ENCODE measurements at regions of chr13 and their contacts with region 1.

Region 1: GRCh38 chr13:39616087-39616694 is 13.2 kb upstream of the LHFPL6 start:
- DNase-seq: peak; percentile 72
- ATAC-seq: peak; percentile 59
- H3K4me3 ChIP-seq: no peak overlapping the region
- H3K27ac ChIP-seq: no peak overlapping the region
- H3K4me1 ChIP-seq: no peaks in the 10 kb centered on the region
- H3K27me3 ChIP-seq: no peaks in the 10 kb centered on the region
- CTCF ChIP-seq: peak; percentile 77

Region 2: GRCh38 chr13:39051157-39051556 is 565.0 kb before region 1 on chr13:
- CTCF ChIA-PET with region 1: interaction called, 5 read pairs
- POLR2A ChIA-PET with region 1: no interaction called
- intact Hi-C with region 1: loop called (anchors 2 kb)
- DNase-seq: peak; percentile 52
- ATAC-seq: no peak
- H3K4me3 ChIP-seq: no peak overlapping the region
- H3K27ac ChIP-seq: no peak overlapping the region
- H3K4me1 ChIP-seq: no peaks in the 10 kb centered on the region
- H3K27me3 ChIP-seq: no peaks in the 10 kb centered on the region
- CTCF ChIP-seq: peak; percentile 61

Region 3: DNA sequence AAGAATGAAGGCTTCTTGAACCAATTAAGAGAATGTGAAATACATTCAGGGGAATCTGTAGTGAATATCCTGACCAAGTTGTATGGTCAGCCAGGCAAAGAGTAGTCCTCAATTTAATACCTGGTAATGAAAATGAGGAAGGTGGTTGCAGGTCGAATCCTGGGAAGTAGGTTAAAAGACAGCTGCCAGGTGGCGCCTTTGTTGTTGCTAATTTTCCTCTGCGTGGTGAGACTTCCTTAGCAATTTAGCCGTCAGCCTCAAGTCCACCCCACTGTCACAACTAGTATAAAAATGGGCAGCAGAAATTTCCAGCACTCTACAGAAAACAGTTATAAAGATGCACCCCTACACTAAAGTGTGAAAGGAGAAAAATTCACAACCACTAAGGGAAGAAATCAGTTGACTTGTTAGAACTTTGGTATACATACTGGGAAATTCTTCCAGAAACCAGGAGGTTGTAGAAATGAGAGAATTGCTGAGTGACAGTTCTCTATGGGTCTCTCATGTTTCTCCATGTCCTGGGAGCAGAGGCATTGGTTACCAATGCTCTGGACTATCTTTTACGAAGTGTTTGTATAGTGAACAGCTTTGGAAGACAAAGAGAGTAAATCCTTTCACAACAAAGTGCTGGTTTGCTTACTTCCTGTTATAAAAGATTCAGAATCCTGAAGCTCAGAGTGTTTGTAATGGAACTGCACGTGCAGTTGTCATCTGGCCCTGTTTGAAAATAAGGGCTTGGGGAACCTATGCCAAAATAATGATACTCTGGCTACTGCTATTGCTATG is 342.0 kb before region 1 on chr13:
- CTCF ChIA-PET with region 1: interaction called, 7 read pairs
- POLR2A ChIA-PET with region 1: no interaction called
- intact Hi-C with region 1: loop called (anchors 1 kb)
- DNase-seq: peak; percentile 28
- ATAC-seq: peak; percentile 64
- H3K4me3 ChIP-seq: no peak overlapping the region
- H3K27ac ChIP-seq: no peak overlapping the region
- H3K4me1 ChIP-seq: no peaks in the 10 kb centered on the region
- H3K27me3 ChIP-seq: peaks cover 10% of the 10 kb centered on the region; the same call in 1 of the 2 replicates
- CTCF ChIP-seq: peak; percentile 42; the same call in 1 of the 2 replicates

Region 4: GRCh38 chr13:39415008-39415802 is 201.0 kb before region 1 on chr13:
- CTCF ChIA-PET with region 1: interaction called, 5 read pairs
- POLR2A ChIA-PET with region 1: no interaction called
- intact Hi-C with region 1: loop called (anchors 1 kb)
- DNase-seq: peak; percentile 44
- ATAC-seq: peak; percentile 81
- H3K4me3 ChIP-seq: no peak overlapping the region
- H3K27ac ChIP-seq: no peak overlapping the region
- H3K4me1 ChIP-seq: peaks cover 7% of the 10 kb centered on the region; the same call in 1 of the 2 replicates
- H3K27me3 ChIP-seq: no peaks in the 10 kb centered on the region
- CTCF ChIP-seq: peak; percentile 66

Measured in PC-3 (cell line).